ENCODE measurements at regions of chrX and their contacts with region 1.

Region 1: DNA sequence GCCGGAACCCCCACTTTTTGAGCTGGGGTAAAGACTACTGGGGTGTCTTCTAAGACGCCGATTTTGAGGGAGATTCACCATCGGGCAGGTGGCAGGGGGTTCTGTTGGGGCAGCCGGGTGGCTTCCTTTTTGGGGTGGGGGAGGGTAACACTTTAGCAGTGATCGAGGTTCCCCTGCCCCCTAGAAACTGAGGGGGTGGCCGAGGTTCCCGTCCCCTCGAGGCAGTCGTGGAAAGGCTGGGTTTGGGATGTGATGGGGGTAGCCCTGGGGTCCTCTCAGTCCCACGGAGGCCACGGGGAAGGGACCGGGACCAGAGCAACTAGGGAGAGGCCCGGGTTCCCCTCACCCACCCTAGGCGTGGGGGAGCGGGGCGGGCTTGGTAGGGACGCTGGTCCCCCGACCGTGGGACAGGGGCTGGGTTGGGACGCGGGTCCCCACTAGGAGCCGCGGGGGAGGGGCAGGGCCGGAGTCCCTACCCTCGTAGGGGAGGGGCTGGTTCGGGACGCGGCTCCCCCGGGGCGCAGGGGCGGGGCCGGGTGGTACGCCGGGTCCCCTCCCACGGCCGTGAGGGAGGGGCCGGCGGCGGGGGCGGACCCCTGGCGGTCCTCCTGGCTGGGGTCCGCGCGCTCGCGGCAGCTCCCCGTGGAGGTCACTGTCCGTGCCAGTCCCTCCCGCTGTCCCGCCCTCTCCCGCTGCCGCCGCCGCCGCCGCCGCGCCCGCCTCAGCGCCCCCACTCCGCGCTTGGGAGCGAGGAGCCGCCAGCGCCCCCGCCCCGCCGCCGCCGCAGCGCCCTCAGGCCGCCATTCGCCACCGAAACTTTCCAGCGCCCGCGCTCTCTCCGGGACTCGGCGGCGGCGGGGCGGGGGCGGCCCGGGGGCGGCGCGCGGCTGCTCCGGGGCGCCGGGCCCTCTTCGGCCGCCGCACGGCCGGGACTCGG is at the start of gene TBL1X:
- DNase-seq: peak; percentile 91
- H3K4me3 ChIP-seq: peak within 1 kb of the TSS; percentile 49 to 89 (median 61)
- H3K27ac ChIP-seq: peak within 1 kb of the TSS in 7 of 8 donors; percentile 72 to 90 (median 79)
- H3K4me1 ChIP-seq: peaks cover 17 to 60% (median 34%) of the 10 kb centered on the region in 6 donors
- H3K27me3 ChIP-seq: peaks cover 0 to 52% (median 5%) of the 10 kb centered on the region in 7 donors
- CTCF ChIP-seq: no peak
- POLR2A ChIP-seq: no peak
- total RNA-seq, gene TBL1X: 20.1 to 37.2 (median 21.8) TPM

Region 2: DNA sequence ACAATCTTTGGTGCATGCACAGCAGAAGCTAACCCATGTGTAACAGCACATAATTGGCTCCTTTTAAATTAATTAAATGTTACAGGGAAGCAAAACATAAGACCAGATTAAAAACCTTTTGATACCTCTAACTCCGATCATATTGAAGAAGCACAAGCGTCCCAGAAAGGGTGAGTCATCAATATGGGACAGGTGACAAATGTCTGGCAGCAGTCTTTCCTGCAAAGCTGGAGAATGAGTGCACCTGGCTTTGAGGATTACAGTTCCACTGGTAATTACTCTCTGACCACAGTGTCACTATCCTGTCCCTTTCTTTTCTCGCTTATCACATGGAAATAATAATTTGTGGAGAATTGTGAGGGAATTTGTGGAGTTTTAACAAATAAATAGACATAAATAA is 525.4 kb before region 1 on chrX:
- intact Hi-C with region 1: no loop called
- DNase-seq: no peak
- H3K4me3 ChIP-seq: no peak overlapping the region
- H3K27ac ChIP-seq: no peak overlapping the region
- H3K4me1 ChIP-seq: no peaks in the 10 kb centered on the region
- H3K27me3 ChIP-seq: no peaks in the 10 kb centered on the region
- CTCF ChIP-seq: no peak
- POLR2A ChIP-seq: no peak

Region 3: GRCh38 chrX:9341291-9342201 is 123.2 kb before region 1 on chrX:
- intact Hi-C with region 1: loop called (anchors 5 kb)
- DNase-seq: peak; percentile 94
- H3K4me3 ChIP-seq: peak overlapping the region in 5 of 8 donors; percentile 1 to 58 (median 22)
- H3K27ac ChIP-seq: peak overlapping the region; percentile 84 to 94 (median 90)
- H3K4me1 ChIP-seq: peaks cover 14 to 44% (median 24%) of the 10 kb centered on the region in 6 donors
- H3K27me3 ChIP-seq: no peaks in the 10 kb centered on the region
- CTCF ChIP-seq: no peak
- POLR2A ChIP-seq: no peak

Measured in spleen (tissue), 13 donors.